Activated B cell treated with CpG ODN at 0.5 μM for 24 hours (primary cell): ENCODE measurements at regions of chr12 and their contacts with region 1.

Region 1: DNA sequence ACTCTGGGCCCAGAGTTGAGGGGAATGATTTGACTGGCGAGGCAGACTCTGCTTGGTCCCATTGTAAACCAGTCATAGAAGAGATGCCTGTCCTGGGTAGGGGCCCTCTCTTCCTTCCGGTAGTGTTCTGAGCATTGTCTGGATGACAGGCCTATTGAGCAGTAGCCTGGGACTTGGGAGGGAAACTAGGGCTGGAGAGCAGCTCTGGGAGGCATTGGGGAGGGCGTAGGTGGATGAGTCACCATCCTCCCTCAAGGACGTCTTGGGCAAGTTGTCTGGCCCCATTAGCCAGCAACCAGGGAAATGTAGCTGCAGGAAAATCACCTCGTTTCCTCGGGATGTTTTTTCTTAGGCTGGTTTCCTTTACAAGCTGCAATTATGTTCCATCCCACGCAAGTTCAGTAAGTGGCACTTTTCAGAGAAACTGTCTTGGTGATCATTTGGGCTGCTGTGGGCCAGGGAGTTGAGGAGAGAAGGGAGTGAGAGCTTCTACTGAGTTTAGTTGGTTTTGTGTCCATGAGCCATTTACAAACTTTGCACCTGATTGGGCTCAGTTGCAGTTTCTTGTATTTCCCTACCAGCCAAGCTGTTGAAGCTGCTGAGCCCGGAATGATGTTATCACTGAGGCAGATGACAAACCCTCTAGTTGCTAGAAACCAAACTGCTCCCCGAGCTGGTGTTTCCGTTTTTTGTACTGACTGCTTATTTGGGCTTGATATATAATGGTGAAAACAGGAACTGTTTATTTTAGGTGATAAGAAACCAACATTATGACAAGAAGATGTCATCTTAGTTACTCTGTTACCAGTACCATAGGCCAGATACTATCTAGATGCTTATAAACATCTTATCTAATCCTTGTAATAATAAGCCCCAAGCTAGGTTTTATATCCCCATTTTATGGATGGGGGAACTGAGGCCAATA is 147.6 kb downstream of the CHST11 start:
- DNase-seq: no peak
- ATAC-seq: peak; percentile 77
- H3K4me3 Mint-ChIP-seq: peak overlapping the region; percentile 11
- H3K27ac Mint-ChIP-seq: peak overlapping the region; percentile 72
- H3K4me1 Mint-ChIP-seq: peaks cover 72% of the 10 kb centered on the region
- H3K27me3 Mint-ChIP-seq: no peaks in the 10 kb centered on the region
- CTCF ChIP-seq: no peak

Region 2: GRCh38 chr12:104582739-104583138 is 21.6 kb before region 1 on chr12:
- CTCF ChIA-PET with region 1: no interaction called
- POLR2A ChIA-PET with region 1: interaction called, 3 read pairs
- intact Hi-C with region 1: loop called (anchors 1 kb)
- DNase-seq: peak; percentile 26
- ATAC-seq: peak; percentile 86
- H3K4me3 Mint-ChIP-seq: peak overlapping the region; percentile 56
- H3K27ac Mint-ChIP-seq: peak overlapping the region; percentile 70
- H3K4me1 Mint-ChIP-seq: peaks cover 89% of the 10 kb centered on the region
- H3K27me3 Mint-ChIP-seq: no peaks in the 10 kb centered on the region
- CTCF ChIP-seq: no peak

Region 3: DNA sequence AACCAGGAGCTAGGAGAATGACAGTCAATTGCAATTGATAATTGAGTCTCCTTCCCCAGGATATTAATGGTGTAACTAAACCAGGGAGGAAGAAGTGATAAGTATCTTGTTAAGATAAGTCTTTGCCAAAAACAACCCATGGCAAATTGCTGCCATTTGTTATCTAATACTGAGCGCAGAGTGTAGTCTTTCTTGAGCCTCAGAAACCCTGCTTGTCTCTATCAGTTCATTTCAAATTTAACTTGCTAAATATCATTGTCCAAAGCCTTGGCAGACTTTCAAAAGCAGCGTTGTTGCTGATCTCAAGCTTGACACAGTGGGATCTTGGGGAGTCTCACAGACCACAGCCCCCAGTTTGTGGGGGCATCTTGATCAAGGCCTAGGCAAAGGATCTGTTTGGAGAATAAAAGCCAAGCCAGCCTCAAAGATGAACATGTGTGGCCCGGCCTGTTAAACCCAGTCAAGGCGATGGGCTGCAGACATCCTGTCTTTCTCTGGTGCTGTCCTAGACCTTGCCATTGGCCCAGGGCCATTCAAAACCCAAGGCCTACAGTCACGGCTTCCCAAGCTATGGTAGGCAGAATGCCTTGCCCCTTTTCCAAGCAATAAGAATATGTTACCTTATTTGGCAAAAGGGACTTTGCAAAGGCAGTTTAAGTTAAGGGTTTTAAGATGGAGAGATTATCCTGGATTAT is 16.7 kb after region 1 on chr12:
- CTCF ChIA-PET with region 1: no interaction called
- POLR2A ChIA-PET with region 1: no interaction called
- intact Hi-C with region 1: loop called (anchors 2 kb)
- DNase-seq: no peak
- ATAC-seq: no peak
- H3K4me3 Mint-ChIP-seq: no peak overlapping the region
- H3K27ac Mint-ChIP-seq: no peak overlapping the region
- H3K4me1 Mint-ChIP-seq: peaks cover 35% of the 10 kb centered on the region
- H3K27me3 Mint-ChIP-seq: no peaks in the 10 kb centered on the region
- CTCF ChIP-seq: no peak